Activated T-helper 1 cell treated with anti-CD3 and anti-CD28 coated beads, Interleukin-12 subunit alpha, Interleukin-12 subunit beta, Interleukin-2, Interleukin-4 antibody, amounts not matched to agents 30 ng/mL and 10 ng/mL and 1 ng/mL, durations not matched to agents 14 hours and 24 hours and 36 hours (primary cell): ENCODE measurements at regions of chr18 and their contacts with region 1.

Region 1: GRCh38 chr18:74534981-74535649 is 815 bp downstream of the CNDP1 start:
- DNase-seq: no peak
- H3K4me3 Mint-ChIP-seq: no peak overlapping the region
- H3K27ac Mint-ChIP-seq: no peak overlapping the region
- H3K4me1 Mint-ChIP-seq: no peaks in the 10 kb centered on the region
- H3K27me3 Mint-ChIP-seq: peaks cover 3% of the 10 kb centered on the region

Region 2: GRCh38 chr18:74139888-74140287 is 395.2 kb before region 1 on chr18:
- intact Hi-C with region 1: no loop called
- DNase-seq: no peak
- H3K4me3 Mint-ChIP-seq: peak overlapping the region; percentile 59
- H3K27ac Mint-ChIP-seq: peak overlapping the region; percentile 93
- H3K4me1 Mint-ChIP-seq: peaks cover 44% of the 10 kb centered on the region
- H3K27me3 Mint-ChIP-seq: peaks cover 5% of the 10 kb centered on the region

Region 3: GRCh38 chr18:74389171-74389927 is 145.8 kb before region 1 on chr18:
- intact Hi-C with region 1: no loop called
- DNase-seq: no peak
- H3K4me3 Mint-ChIP-seq: no peak overlapping the region
- H3K27ac Mint-ChIP-seq: no peak overlapping the region
- H3K4me1 Mint-ChIP-seq: peaks cover 15% of the 10 kb centered on the region
- H3K27me3 Mint-ChIP-seq: peaks cover 11% of the 10 kb centered on the region

Region 4: DNA sequence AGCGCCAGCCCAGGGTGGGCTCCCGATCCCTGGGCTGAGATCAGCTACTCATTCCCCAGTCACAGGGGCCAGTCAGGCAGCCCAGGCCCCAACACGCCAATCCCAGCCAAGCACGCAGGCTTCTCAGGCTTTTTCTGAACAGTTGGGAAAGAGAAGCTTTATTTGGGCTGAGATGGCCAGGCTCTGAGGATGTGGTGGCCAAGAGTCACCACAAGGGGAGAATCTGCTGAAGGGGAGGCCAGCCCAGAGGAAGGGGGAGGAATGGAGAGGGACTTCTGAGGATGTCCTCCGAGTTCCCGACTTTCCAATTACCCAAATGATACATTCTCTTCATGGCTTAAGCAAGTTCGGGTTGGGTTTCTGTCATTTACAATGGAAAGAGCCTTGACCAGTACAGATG is 75.2 kb before region 1 on chr18:
- intact Hi-C with region 1: loop called (anchors 5 kb)
- DNase-seq: no peak
- H3K4me3 Mint-ChIP-seq: no peak overlapping the region
- H3K27ac Mint-ChIP-seq: no peak overlapping the region
- H3K4me1 Mint-ChIP-seq: no peaks in the 10 kb centered on the region
- H3K27me3 Mint-ChIP-seq: peaks cover 39% of the 10 kb centered on the region

Region 5: DNA sequence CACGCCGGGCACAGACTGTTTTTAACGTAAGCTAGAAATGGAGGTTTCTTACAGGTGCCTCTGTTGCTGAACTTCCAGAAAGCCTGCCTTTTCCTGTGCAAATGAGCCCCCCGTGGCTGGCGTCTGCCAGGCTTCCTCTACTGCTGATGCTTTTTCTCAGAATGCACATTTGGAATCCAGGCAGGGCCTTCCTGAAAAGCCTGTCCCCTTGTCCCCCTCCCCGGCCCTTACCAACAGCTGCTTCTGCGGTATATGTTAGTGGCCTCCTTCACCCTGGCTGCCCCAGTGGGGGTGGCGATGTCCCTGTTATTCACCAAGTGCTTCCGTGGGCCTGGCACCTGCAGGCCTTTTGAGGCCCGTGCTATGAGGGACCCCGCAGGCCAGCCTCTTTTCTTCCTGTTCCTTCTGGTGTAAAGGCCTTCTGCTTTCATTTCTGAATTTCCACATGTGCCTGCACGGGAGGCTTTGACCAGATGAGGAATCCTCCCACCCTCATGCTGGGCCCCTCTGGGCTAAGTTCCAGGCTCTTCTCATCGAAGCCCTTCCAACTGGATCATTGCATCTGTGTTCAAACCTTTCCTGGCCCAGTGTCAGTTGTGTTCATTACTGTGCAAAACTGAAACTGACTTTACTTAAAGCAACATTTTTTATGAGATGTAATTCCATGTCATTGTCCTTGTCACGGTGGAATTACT is 28.5 kb before region 1 on chr18:
- intact Hi-C with region 1: no loop called
- DNase-seq: no peak
- H3K4me3 Mint-ChIP-seq: no peak overlapping the region
- H3K27ac Mint-ChIP-seq: peak overlapping the region; percentile 60
- H3K4me1 Mint-ChIP-seq: peaks cover 23% of the 10 kb centered on the region
- H3K27me3 Mint-ChIP-seq: no peaks in the 10 kb centered on the region